CD8-positive, alpha-beta T cell (primary cell): ENCODE measurements at regions of chr3 and their contacts with region 1.

Region 1: DNA sequence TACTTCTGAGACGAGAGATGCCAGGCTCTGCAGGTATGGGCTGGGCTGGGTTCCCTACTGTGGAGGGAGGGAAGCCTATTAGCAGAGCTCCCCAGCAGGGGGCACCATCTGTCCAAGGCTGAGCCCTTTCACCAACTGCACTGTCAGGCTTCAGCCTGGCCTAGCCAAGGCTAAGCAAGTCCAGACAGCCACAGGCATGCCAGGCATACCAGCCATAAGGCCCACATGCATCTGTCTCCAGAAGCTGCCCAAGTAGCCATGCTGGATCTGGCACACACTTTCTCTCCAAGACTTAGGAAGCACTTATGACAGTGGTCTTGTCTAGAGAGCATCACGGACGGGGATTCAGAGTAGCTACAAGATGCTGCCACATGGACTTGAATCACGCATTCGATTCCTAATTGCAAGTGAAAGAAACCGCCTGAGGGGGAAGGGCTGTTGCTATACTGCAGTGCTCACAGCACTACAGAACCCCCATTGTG is 28.3 kb downstream of the RUVBL1 start:
- DNase-seq: peak; percentile 65 to 87 (median 80)
- ATAC-seq: peak; percentile 99
- H3K4me3 ChIP-seq: no peak overlapping the region
- H3K4me3 Mint-ChIP-seq: no peak overlapping the region
- H3K27ac ChIP-seq: no peak overlapping the region
- H3K27ac Mint-ChIP-seq: peak overlapping the region; percentile 42
- H3K4me1 ChIP-seq: peaks cover 6% of the 10 kb centered on the region
- H3K4me1 Mint-ChIP-seq: peaks cover 11% of the 10 kb centered on the region
- H3K27me3 ChIP-seq: no peaks in the 10 kb centered on the region
- H3K27me3 Mint-ChIP-seq: no peaks in the 10 kb centered on the region
- CTCF ChIP-seq: peak; percentile 69

Region 2: GRCh38 chr3:128068211-128068620 is 27.0 kb before region 1 on chr3:
- CTCF ChIA-PET with region 1: no interaction called
- POLR2A ChIA-PET with region 1: no interaction called
- intact Hi-C with region 1: no loop called
- DNase-seq: peak in 4 of 9 experiments; percentile 23 to 67 (median 50)
- ATAC-seq: peak; percentile 74
- H3K4me3 ChIP-seq: no peak overlapping the region
- H3K4me3 Mint-ChIP-seq: no peak overlapping the region
- H3K27ac ChIP-seq: no peak overlapping the region
- H3K27ac Mint-ChIP-seq: peak overlapping the region; percentile 42
- H3K4me1 ChIP-seq: no peaks in the 10 kb centered on the region
- H3K4me1 Mint-ChIP-seq: no peaks in the 10 kb centered on the region
- H3K27me3 ChIP-seq: no peaks in the 10 kb centered on the region
- H3K27me3 Mint-ChIP-seq: no peaks in the 10 kb centered on the region
- CTCF ChIP-seq: peak; percentile 77

Region 3: GRCh38 chr3:128123538-128124368 is 28.5 kb after region 1 on chr3 and contains the start of gene RUVBL1:
- CTCF ChIA-PET with region 1: interaction called, 14 read pairs
- POLR2A ChIA-PET with region 1: no interaction called
- intact Hi-C with region 1: no loop called
- DNase-seq: peak; percentile 92 to 99 (median 96)
- ATAC-seq: peak; percentile 92
- H3K4me3 ChIP-seq: peak within 1 kb of the TSS; percentile 82 to 90
- H3K4me3 Mint-ChIP-seq: peak within 1 kb of the TSS; percentile 98
- H3K27ac ChIP-seq: peak within 1 kb of the TSS; percentile 86 to 96
- H3K27ac Mint-ChIP-seq: peak within 1 kb of the TSS; percentile 98
- H3K4me1 ChIP-seq: peaks cover 19% of the 10 kb centered on the region
- H3K4me1 Mint-ChIP-seq: peaks cover 27% of the 10 kb centered on the region
- H3K27me3 ChIP-seq: no peaks in the 10 kb centered on the region
- H3K27me3 Mint-ChIP-seq: no peaks in the 10 kb centered on the region
- CTCF ChIP-seq: no peak
- total RNA-seq, gene RUVBL1: 5.1 to 5.6 TPM

Region 4: DNA sequence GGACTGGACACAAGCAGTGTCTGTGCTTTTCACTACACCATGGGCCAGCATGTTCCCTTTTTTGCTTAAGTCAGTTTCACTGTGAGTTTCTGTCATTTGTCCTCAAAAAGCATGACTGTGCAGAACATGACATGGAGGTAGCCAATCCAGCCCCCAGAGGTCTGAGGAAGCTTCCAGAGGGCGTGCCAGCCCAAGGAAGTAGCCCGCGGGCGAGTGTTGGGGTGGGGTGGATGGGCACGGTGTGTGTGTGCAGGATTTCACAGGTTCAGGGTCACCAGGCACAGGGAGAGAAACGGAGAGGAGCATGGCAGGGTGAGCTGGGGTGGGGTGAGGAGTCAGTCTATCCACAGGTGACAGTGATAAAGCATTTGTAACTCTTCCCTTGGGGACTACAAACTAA is 50.1 kb after region 1 on chr3:
- CTCF ChIA-PET with region 1: no interaction called
- POLR2A ChIA-PET with region 1: no interaction called
- intact Hi-C with region 1: no loop called
- DNase-seq: peak in 1 of 9 experiments; percentile 17
- ATAC-seq: no peak
- H3K4me3 ChIP-seq: no peak overlapping the region
- H3K4me3 Mint-ChIP-seq: no peak overlapping the region
- H3K27ac ChIP-seq: no peak overlapping the region
- H3K27ac Mint-ChIP-seq: no peak overlapping the region
- H3K4me1 ChIP-seq: no peaks in the 10 kb centered on the region
- H3K4me1 Mint-ChIP-seq: no peaks in the 10 kb centered on the region
- H3K27me3 ChIP-seq: no peaks in the 10 kb centered on the region
- H3K27me3 Mint-ChIP-seq: no peaks in the 10 kb centered on the region
- CTCF ChIP-seq: no peak

Region 5: DNA sequence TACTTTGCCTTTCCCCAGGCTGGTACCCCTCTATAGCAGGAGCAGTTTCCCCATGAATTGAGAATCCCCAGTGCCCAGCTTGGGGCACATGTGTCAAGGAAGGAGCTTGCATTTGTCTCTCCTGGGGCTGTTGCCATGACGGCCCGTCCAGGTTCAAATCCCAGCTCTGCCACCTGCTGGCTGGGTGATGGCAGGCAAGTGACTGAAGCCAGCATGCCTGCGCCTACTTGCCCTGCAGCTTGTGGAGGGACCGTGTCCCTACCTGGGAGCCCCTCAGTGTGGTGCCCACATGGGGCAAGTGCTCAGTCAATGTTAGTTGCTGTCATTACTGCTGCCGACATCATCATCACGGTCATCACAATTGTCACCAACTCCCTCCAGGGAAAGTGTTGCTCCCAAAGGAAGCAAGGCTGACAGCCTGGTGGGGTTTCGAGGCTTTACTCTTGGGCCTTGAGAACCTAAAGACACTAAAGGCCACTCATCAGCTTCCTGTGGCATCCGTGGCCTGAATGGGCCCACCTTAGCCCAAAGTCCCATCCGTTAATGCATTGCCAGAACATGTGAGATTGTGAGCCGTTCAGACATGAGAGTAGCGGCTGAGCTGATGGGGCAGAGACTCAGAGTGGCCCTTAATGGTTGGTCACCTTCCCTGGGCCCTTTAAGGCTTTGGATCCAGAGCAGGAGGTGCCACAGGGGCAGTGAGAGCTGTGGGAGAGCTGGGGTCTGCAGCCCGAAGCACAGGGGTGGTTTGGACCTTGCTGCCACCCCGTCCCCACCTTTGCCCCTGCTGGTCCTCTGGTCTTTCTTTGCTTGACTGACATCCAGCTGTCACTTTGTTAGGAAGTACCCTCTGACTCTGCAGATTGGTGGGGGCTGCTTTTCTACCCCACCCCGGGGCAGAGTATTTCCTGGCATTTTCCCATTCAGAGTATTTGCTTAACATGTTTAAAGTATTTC is 227.1 kb after region 1 on chr3:
- CTCF ChIA-PET with region 1: interaction called, 42 read pairs
- POLR2A ChIA-PET with region 1: no interaction called
- intact Hi-C with region 1: loop called (anchors 1 kb)
- DNase-seq: peak; percentile 25 to 83 (median 63)
- ATAC-seq: peak; percentile 64
- H3K4me3 ChIP-seq: no peak overlapping the region
- H3K4me3 Mint-ChIP-seq: no peak overlapping the region
- H3K27ac ChIP-seq: no peak overlapping the region
- H3K27ac Mint-ChIP-seq: peak overlapping the region; percentile 69
- H3K4me1 ChIP-seq: peaks cover 59% of the 10 kb centered on the region
- H3K4me1 Mint-ChIP-seq: peaks cover 70% of the 10 kb centered on the region
- H3K27me3 ChIP-seq: no peaks in the 10 kb centered on the region
- H3K27me3 Mint-ChIP-seq: no peaks in the 10 kb centered on the region
- CTCF ChIP-seq: peak; percentile 42

Region 6: DNA sequence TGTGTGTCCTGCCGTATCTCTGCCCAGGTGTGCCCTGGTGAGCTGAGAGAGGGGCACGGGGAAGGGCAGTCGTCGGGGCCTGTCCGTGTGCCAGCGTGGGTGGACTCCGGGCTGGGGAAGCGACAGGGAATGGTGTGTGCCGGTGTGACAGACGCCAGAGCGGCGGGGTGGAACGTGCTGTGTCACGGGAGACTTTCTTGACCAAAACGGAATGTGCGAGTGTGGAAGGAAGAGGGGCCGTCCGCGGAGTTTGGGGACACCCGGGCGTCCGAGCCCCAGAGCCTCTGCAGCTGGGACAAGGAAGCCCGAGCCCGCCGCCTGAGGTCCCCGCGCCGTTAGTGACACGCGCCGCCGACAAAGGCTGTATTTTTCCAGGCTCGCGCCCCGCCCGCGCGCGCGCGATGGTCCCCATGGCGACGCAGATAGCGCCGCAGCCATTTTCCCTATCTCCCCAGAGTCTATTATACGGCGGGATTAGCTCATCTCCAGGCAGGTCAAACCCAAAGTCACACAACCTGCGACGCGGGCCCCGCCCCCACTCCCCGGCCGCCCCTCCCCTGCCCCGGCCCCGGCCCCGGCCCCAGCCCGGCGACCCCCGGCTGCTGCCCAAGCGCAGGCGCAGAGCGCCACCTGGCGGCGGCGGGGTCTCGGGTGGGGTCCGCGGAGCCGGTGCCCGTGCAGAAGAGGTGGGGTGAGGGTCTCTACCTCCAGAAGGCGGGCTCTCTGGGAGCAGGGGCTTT is 402.3 kb after region 1 on chr3:
- CTCF ChIA-PET with region 1: interaction called, 10 read pairs
- POLR2A ChIA-PET with region 1: no interaction called
- intact Hi-C with region 1: loop called (anchors 1 kb)
- DNase-seq: peak; percentile 31 to 83 (median 63)
- ATAC-seq: peak; percentile 64
- H3K4me3 ChIP-seq: peak overlapping the region; percentile 47 to 52
- H3K4me3 Mint-ChIP-seq: peak overlapping the region; percentile 80
- H3K27ac ChIP-seq: no peak overlapping the region
- H3K27ac Mint-ChIP-seq: no peak overlapping the region
- H3K4me1 ChIP-seq: peaks cover 9% of the 10 kb centered on the region
- H3K4me1 Mint-ChIP-seq: peaks cover 9% of the 10 kb centered on the region
- H3K27me3 ChIP-seq: peaks cover 18 to 19% of the 10 kb centered on the region in 2 experiments
- H3K27me3 Mint-ChIP-seq: peaks cover 53% of the 10 kb centered on the region
- CTCF ChIP-seq: peak; percentile 76